ENCODE measurements at regions of chr15 and their contacts with region 1.

Region 1: DNA sequence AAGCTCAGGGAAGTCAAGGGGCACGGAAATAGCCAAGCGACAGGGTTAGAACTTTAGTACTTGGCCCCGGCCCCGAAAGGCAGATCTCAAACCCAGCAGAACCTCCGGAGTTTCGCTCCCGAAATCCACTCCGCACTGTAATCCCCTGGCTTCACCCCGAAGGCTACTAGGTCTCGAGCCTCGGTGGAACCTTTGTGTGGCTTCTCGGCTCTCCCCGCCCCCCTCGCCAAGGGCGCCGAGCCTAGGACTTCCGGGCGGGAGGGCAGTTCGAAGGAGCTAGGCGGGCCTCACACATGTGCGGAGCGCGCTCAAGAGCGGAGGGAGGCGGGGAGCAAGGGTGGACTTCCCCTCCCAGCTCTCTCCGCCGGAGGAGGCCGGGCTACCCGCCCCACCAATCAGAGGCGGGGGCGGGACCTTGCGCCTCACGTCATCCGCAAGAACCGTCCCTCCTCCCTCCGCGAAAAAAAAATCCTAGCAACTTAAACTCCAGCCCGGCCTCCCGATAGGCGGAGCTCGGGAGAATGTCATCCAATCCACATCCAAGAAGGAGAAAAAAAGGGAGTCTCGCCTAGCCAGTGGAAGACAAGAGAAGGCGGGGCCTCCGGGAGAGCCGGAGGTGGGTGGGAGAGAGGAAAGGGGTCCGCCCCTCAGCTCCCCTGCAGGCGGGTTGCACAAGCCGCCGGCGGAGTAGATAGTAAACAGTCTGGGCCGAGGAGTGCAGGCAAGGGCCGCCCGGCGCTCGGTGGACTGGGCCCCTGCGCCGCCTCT is 2.4 kb upstream of the SIN3A start:
- DNase-seq: peak; percentile 90 to 100 (median 96)
- ATAC-seq: peak; percentile 37
- H3K4me3 ChIP-seq: peak overlapping the region; percentile 93
- H3K4me3 Mint-ChIP-seq: peak overlapping the region; percentile 98
- H3K27ac ChIP-seq: peak overlapping the region; percentile 91 to 99
- H3K27ac Mint-ChIP-seq: peak overlapping the region; percentile 96
- H3K4me1 ChIP-seq: peaks cover 43% of the 10 kb centered on the region
- H3K4me1 Mint-ChIP-seq: peaks cover 43% of the 10 kb centered on the region
- H3K27me3 ChIP-seq: no peaks in the 10 kb centered on the region
- H3K27me3 Mint-ChIP-seq: no peaks in the 10 kb centered on the region
- CTCF ChIP-seq: no peak

Region 2: DNA sequence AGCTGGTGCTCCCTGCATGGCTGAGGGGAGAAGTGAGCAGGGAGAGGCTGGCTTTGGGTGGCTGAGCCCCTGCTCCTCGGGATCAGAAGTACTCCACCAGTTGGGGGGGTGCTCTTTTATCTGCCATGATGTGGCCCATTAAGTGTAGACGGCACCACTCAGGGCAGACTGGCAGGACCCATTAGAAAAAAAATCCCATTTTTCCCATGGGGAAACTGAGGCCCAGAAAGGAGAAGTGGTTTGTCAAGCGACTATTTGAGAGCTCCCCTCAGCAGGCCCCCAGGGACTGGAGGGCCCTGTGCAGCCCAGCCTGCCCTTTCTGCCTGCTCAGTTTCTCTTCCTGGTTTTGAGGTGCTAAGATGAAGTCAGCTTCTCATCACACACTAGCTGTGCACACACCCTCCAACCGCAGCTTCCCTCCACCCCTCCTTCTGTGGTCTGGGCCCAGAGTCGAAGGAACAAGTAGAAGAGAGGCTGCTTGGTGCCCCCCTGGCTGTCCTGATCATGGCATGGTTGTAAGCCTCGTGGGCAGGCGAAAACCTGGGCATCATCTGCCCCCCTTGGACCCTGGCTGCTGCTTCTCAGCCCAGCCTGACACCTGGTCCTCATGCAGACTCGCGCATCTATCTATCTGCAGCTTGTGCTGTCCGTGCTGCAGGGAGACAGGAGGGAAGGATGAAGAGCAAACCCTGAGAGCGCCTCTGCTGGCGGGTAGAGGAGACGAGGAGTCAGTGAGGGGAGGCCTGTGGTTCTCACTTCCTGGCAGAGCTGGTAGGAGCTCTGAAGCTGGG is 666.4 kb before region 1 on chr15:
- CTCF ChIA-PET with region 1: no interaction called
- POLR2A ChIA-PET with region 1: interaction called, 17 read pairs
- intact Hi-C with region 1: no loop called
- DNase-seq: peak; percentile 78 to 98 (median 84)
- ATAC-seq: peak; percentile 72
- H3K4me3 ChIP-seq: peak overlapping the region; percentile 100
- H3K4me3 Mint-ChIP-seq: peak overlapping the region; percentile 90
- H3K27ac ChIP-seq: peak overlapping the region; percentile 69 to 93
- H3K27ac Mint-ChIP-seq: peak overlapping the region; percentile 94
- H3K4me1 ChIP-seq: peaks cover 91% of the 10 kb centered on the region
- H3K4me1 Mint-ChIP-seq: peaks cover 71% of the 10 kb centered on the region
- H3K27me3 ChIP-seq: no peaks in the 10 kb centered on the region
- H3K27me3 Mint-ChIP-seq: no peaks in the 10 kb centered on the region
- CTCF ChIP-seq: peak; percentile 83

Region 3: DNA sequence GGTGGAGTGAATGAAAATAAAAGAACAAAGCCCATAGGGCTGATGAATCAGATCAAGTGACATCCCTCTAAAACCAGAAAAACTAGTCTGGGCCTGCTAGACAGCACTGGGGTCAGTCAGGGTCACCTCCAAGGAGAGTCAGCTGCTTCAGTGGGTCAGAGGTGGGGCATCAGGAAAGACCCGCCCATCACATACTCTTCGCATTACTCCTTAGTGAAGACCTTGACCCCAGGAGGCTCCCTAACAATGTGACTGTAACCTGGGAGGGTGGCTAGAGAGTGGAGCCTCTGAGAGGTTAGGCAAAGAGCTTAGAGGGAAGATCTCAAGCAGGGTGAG is 417.6 kb before region 1 on chr15:
- CTCF ChIA-PET with region 1: no interaction called
- POLR2A ChIA-PET with region 1: no interaction called
- intact Hi-C with region 1: no loop called
- DNase-seq: no peak
- ATAC-seq: no peak
- H3K4me3 ChIP-seq: no peak overlapping the region
- H3K4me3 Mint-ChIP-seq: no peak overlapping the region
- H3K27ac ChIP-seq: no peak overlapping the region
- H3K27ac Mint-ChIP-seq: no peak overlapping the region
- H3K4me1 ChIP-seq: peaks cover 6% of the 10 kb centered on the region
- H3K4me1 Mint-ChIP-seq: peaks cover 21% of the 10 kb centered on the region
- H3K27me3 ChIP-seq: no peaks in the 10 kb centered on the region
- H3K27me3 Mint-ChIP-seq: no peaks in the 10 kb centered on the region
- CTCF ChIP-seq: no peak

Region 4: GRCh38 chr15:75138016-75138999 is 315.6 kb before region 1 on chr15:
- CTCF ChIA-PET with region 1: no interaction called
- POLR2A ChIA-PET with region 1: no interaction called
- intact Hi-C with region 1: no loop called
- DNase-seq: no peak
- ATAC-seq: no peak
- H3K4me3 ChIP-seq: no peak overlapping the region
- H3K4me3 Mint-ChIP-seq: no peak overlapping the region
- H3K27ac ChIP-seq: no peak overlapping the region
- H3K27ac Mint-ChIP-seq: no peak overlapping the region
- H3K4me1 ChIP-seq: no peaks in the 10 kb centered on the region
- H3K4me1 Mint-ChIP-seq: no peaks in the 10 kb centered on the region
- H3K27me3 ChIP-seq: no peaks in the 10 kb centered on the region
- H3K27me3 Mint-ChIP-seq: no peaks in the 10 kb centered on the region
- CTCF ChIP-seq: no peak

Region 5: DNA sequence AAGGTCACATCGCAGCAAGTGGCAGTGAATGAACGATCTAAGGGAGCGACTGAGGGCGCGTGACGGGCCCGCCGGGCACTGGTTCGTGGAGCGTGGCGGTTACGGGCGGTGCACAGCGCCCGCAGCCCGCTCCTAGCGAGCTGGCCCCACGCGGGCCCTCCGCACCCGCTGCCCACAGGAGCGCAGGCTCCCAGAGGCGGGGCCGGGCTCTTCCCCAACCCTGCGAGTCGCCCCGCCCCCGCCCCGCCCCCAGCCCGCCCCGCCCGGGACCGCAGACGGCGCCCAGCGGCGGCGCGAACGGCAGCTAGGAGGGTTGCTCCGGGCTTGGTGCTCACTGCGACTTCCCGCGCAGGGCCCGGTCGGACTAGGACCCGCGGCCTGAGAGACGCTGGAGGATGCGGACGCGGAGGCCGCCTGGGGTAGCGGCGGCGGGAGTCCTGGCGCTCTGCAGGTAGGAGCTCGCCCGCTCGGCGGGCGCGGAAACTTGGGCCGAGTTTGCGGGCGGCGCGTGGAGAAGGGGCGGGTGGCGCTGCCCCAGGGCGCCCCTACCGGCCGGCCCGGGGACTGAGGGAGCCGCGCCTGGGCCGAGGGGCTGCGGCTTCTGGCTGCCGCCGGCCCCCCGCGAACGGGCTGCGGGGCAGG is 252.2 kb before region 1 on chr15 and contains the start of gene C15orf39:
- CTCF ChIA-PET with region 1: no interaction called
- POLR2A ChIA-PET with region 1: interaction called, 7 read pairs
- intact Hi-C with region 1: loop called (anchors 5 to 10 kb)
- DNase-seq: peak; percentile 45 to 89 (median 69)
- ATAC-seq: peak; percentile 53
- H3K4me3 ChIP-seq: peak within 1 kb of the TSS; percentile 73
- H3K4me3 Mint-ChIP-seq: peak within 1 kb of the TSS; percentile 96
- H3K27ac ChIP-seq: peak within 1 kb of the TSS; percentile 44 to 88
- H3K27ac Mint-ChIP-seq: peak within 1 kb of the TSS; percentile 96
- H3K4me1 ChIP-seq: peaks cover 57% of the 10 kb centered on the region
- H3K4me1 Mint-ChIP-seq: peaks cover 37% of the 10 kb centered on the region
- H3K27me3 ChIP-seq: no peaks in the 10 kb centered on the region
- H3K27me3 Mint-ChIP-seq: no peaks in the 10 kb centered on the region
- CTCF ChIP-seq: peak; percentile 80
- total RNA-seq, gene C15orf39: 41.6 to 42.1 TPM

Region 6: GRCh38 chr15:75410196-75410595 is 43.7 kb before region 1 on chr15:
- CTCF ChIA-PET with region 1: no interaction called
- POLR2A ChIA-PET with region 1: interaction called, 10 read pairs
- intact Hi-C with region 1: no loop called
- DNase-seq: no peak
- ATAC-seq: no peak
- H3K4me3 ChIP-seq: no peak overlapping the region
- H3K4me3 Mint-ChIP-seq: no peak overlapping the region
- H3K27ac ChIP-seq: no peak overlapping the region
- H3K27ac Mint-ChIP-seq: no peak overlapping the region
- H3K4me1 ChIP-seq: no peaks in the 10 kb centered on the region
- H3K4me1 Mint-ChIP-seq: peaks cover 5% of the 10 kb centered on the region
- H3K27me3 ChIP-seq: no peaks in the 10 kb centered on the region
- H3K27me3 Mint-ChIP-seq: no peaks in the 10 kb centered on the region
- CTCF ChIP-seq: no peak

Region 7: GRCh38 chr15:75508840-75509532 is 55.1 kb after region 1 on chr15:
- CTCF ChIA-PET with region 1: no interaction called
- POLR2A ChIA-PET with region 1: interaction called, 10 read pairs
- intact Hi-C with region 1: loop called in 1 of 2 experiments (anchors 5 kb)
- DNase-seq: peak in 6 of 14 experiments; percentile 15 to 64 (median 48)
- ATAC-seq: peak; percentile 34
- H3K4me3 ChIP-seq: no peak overlapping the region
- H3K4me3 Mint-ChIP-seq: no peak overlapping the region
- H3K27ac ChIP-seq: no peak overlapping the region
- H3K27ac Mint-ChIP-seq: peak overlapping the region; percentile 13
- H3K4me1 ChIP-seq: no peaks in the 10 kb centered on the region
- H3K4me1 Mint-ChIP-seq: no peaks in the 10 kb centered on the region
- H3K27me3 ChIP-seq: no peaks in the 10 kb centered on the region
- H3K27me3 Mint-ChIP-seq: no peaks in the 10 kb centered on the region
- CTCF ChIP-seq: peak; percentile 60

Region 8: GRCh38 chr15:75531041-75531450 is 77.2 kb after region 1 on chr15:
- CTCF ChIA-PET with region 1: no interaction called
- POLR2A ChIA-PET with region 1: no interaction called
- intact Hi-C with region 1: no loop called
- DNase-seq: no peak
- ATAC-seq: no peak
- H3K4me3 ChIP-seq: no peak overlapping the region
- H3K4me3 Mint-ChIP-seq: no peak overlapping the region
- H3K27ac ChIP-seq: no peak overlapping the region
- H3K27ac Mint-ChIP-seq: no peak overlapping the region
- H3K4me1 ChIP-seq: no peaks in the 10 kb centered on the region
- H3K4me1 Mint-ChIP-seq: peaks cover 32% of the 10 kb centered on the region
- H3K27me3 ChIP-seq: no peaks in the 10 kb centered on the region
- H3K27me3 Mint-ChIP-seq: no peaks in the 10 kb centered on the region
- CTCF ChIP-seq: no peak

Region 9: GRCh38 chr15:75625542-75626347 is 171.9 kb after region 1 on chr15 and contains the start of gene SNUPN:
- CTCF ChIA-PET with region 1: interaction called, 5 read pairs
- POLR2A ChIA-PET with region 1: interaction called, 143 read pairs
- intact Hi-C with region 1: loop called (anchors 1 to 5 kb)
- DNase-seq: peak; percentile 86 to 97 (median 92)
- ATAC-seq: peak; percentile 92
- H3K4me3 ChIP-seq: peak within 1 kb of the TSS; percentile 100
- H3K4me3 Mint-ChIP-seq: peak within 1 kb of the TSS; percentile 92
- H3K27ac ChIP-seq: peak within 1 kb of the TSS; percentile 95
- H3K27ac Mint-ChIP-seq: peak within 1 kb of the TSS; percentile 90
- H3K4me1 ChIP-seq: peaks cover 31% of the 10 kb centered on the region
- H3K4me1 Mint-ChIP-seq: peaks cover 29% of the 10 kb centered on the region
- H3K27me3 ChIP-seq: no peaks in the 10 kb centered on the region
- H3K27me3 Mint-ChIP-seq: no peaks in the 10 kb centered on the region
- CTCF ChIP-seq: no peak
- total RNA-seq, gene SNUPN: 10.0 to 11.6 TPM

Region 10: GRCh38 chr15:75842722-75843551 is 389.1 kb after region 1 on chr15 and contains the start of gene UBE2Q2:
- CTCF ChIA-PET with region 1: no interaction called
- POLR2A ChIA-PET with region 1: interaction called, 16 read pairs
- intact Hi-C with region 1: no loop called
- DNase-seq: peak; percentile 53 to 88 (median 68)
- ATAC-seq: peak; percentile 55
- H3K4me3 ChIP-seq: peak within 1 kb of the TSS; percentile 83
- H3K4me3 Mint-ChIP-seq: peak within 1 kb of the TSS; percentile 93
- H3K27ac ChIP-seq: peak within 1 kb of the TSS; percentile 57 to 60
- H3K27ac Mint-ChIP-seq: peak within 1 kb of the TSS; percentile 91
- H3K4me1 ChIP-seq: peaks cover 30% of the 10 kb centered on the region
- H3K4me1 Mint-ChIP-seq: peaks cover 44% of the 10 kb centered on the region
- H3K27me3 ChIP-seq: no peaks in the 10 kb centered on the region
- H3K27me3 Mint-ChIP-seq: no peaks in the 10 kb centered on the region
- CTCF ChIP-seq: no peak
- total RNA-seq, gene UBE2Q2: 29.3 to 33.5 TPM

Region 11: DNA sequence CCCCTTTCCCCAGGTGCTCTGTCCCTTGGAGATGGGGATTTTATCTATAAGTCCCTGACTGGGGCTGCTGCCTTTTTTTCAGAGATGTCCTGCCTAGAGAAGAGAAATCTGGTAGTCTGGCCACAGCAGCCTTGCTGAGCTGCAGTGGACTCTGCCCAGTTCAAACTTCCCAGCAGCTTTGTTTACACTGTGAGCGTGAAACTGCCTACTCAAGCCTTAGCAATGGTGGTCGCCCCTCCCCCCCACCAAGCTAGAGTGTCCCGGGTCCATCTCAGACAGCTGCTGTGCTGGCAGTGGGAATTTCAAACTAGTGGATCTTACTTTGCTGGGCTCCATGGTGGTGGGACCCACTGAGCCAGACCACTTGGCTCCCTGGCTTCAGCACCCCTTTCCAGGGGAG is 644.8 kb after region 1 on chr15:
- CTCF ChIA-PET with region 1: no interaction called
- POLR2A ChIA-PET with region 1: no interaction called
- intact Hi-C with region 1: no loop called
- DNase-seq: no peak
- ATAC-seq: no peak
- H3K4me3 ChIP-seq: no peak overlapping the region
- H3K4me3 Mint-ChIP-seq: no peak overlapping the region
- H3K27ac ChIP-seq: no peak overlapping the region
- H3K27ac Mint-ChIP-seq: no peak overlapping the region
- H3K4me1 ChIP-seq: no peaks in the 10 kb centered on the region
- H3K4me1 Mint-ChIP-seq: no peaks in the 10 kb centered on the region
- H3K27me3 ChIP-seq: peaks cover 21 to 25% of the 10 kb centered on the region in 2 experiments
- H3K27me3 Mint-ChIP-seq: peaks cover 72% of the 10 kb centered on the region
- CTCF ChIP-seq: no peak

Measured in CD4-positive, alpha-beta T cell (primary cell).